ENCODE measurements at regions of chr11 and their contacts with region 1.

Region 1: DNA sequence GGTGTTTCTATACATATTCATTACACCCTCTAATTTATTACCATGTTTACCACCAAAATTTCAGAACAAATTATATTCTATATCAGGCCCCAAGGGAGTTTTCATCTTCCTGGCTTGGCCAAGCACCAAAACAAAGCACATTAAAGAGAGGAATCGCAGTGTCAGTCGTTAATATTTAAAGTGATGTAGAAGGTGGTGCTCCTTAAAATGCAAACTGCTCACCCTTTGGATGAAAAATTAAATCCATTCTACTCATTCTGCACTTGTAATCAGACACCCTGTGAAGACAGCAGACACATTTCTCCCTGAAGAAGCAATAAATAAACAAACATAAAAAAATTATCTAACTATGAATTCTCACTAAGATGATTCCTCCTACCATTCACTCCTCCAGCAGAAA is 113.4 kb downstream of the LRRC4C start:
- DNase-seq: no peak
- H3K4me3 ChIP-seq: no peak overlapping the region
- H3K27ac ChIP-seq: no peak overlapping the region
- H3K4me1 ChIP-seq: no peaks in the 10 kb centered on the region
- H3K27me3 ChIP-seq: no peaks in the 10 kb centered on the region
- CTCF ChIP-seq: no peak
- EP300 ChIP-seq: no peak
- POLR2A ChIP-seq: no peak

Region 2: GRCh38 chr11:41146326-41146725 is 199.7 kb before region 1 on chr11:
- intact Hi-C with region 1: no loop called
- DNase-seq: no peak
- H3K4me3 ChIP-seq: no peak overlapping the region
- H3K27ac ChIP-seq: no peak overlapping the region
- H3K4me1 ChIP-seq: no peaks in the 10 kb centered on the region
- H3K27me3 ChIP-seq: no peaks in the 10 kb centered on the region
- CTCF ChIP-seq: no peak
- EP300 ChIP-seq: no peak
- POLR2A ChIP-seq: no peak

Region 3: GRCh38 chr11:41281131-41281742 is 64.8 kb before region 1 on chr11:
- intact Hi-C with region 1: loop called in 1 of 4 experiments (anchors 10 kb)
- DNase-seq: no peak
- H3K4me3 ChIP-seq: no peak overlapping the region
- H3K27ac ChIP-seq: no peak overlapping the region
- H3K4me1 ChIP-seq: no peaks in the 10 kb centered on the region
- H3K27me3 ChIP-seq: no peaks in the 10 kb centered on the region
- CTCF ChIP-seq: no peak
- EP300 ChIP-seq: no peak
- POLR2A ChIP-seq: no peak

Region 4: GRCh38 chr11:41334007-41334933 is 11.8 kb before region 1 on chr11:
- intact Hi-C with region 1: loop called in 1 of 4 experiments (anchors 2 kb)
- DNase-seq: no peak
- H3K4me3 ChIP-seq: no peak overlapping the region
- H3K27ac ChIP-seq: no peak overlapping the region
- H3K4me1 ChIP-seq: no peaks in the 10 kb centered on the region
- H3K27me3 ChIP-seq: no peaks in the 10 kb centered on the region
- CTCF ChIP-seq: no peak
- EP300 ChIP-seq: no peak
- POLR2A ChIP-seq: no peak

Region 5: GRCh38 chr11:41377709-41378394 is 31.8 kb after region 1 on chr11:
- intact Hi-C with region 1: no loop called
- DNase-seq: no peak
- H3K4me3 ChIP-seq: no peak overlapping the region
- H3K27ac ChIP-seq: no peak overlapping the region
- H3K4me1 ChIP-seq: no peaks in the 10 kb centered on the region
- H3K27me3 ChIP-seq: no peaks in the 10 kb centered on the region
- CTCF ChIP-seq: no peak
- EP300 ChIP-seq: no peak
- POLR2A ChIP-seq: no peak

Region 6: DNA sequence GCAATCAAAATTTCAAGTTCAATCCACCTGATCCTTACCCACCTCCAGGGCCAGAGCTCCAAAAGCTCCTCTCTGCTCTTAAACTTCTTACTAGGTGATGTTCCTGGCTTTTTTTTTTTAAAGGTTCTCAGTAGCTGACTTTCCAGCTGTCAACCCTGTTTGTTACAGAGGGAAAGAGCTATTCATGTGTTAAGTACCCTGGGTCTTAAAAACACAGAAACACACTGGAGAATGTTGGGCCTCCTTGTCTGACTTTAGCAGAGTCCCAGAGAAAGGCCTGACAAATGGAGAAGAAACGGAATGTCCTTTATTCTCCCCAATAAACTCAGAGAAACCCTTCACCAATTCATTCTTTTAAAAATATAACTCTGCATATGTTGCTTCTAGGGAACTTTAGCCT is 110.2 kb after region 1 on chr11:
- intact Hi-C with region 1: no loop called
- DNase-seq: no peak
- H3K4me3 ChIP-seq: no peak overlapping the region
- H3K27ac ChIP-seq: no peak overlapping the region
- H3K4me1 ChIP-seq: no peaks in the 10 kb centered on the region
- H3K27me3 ChIP-seq: no peaks in the 10 kb centered on the region
- CTCF ChIP-seq: no peak
- EP300 ChIP-seq: no peak
- POLR2A ChIP-seq: no peak

Measured in ovary (tissue), 10 donors.